ENCODE measurements at regions of chr17 and their contacts with region 1.

Region 1: GRCh38 chr17:50297407-50297865 is 23.2 kb downstream of the TMEM92 start:
- DNase-seq: peak; percentile 94
- H3K4me3 Mint-ChIP-seq: no peak overlapping the region
- H3K27ac Mint-ChIP-seq: no peak overlapping the region
- H3K4me1 Mint-ChIP-seq: no peaks in the 10 kb centered on the region
- H3K27me3 Mint-ChIP-seq: peaks cover 27% of the 10 kb centered on the region
- CTCF ChIP-seq: peak; percentile 99

Region 2: GRCh38 chr17:49843774-49844350 is 453.6 kb before region 1 on chr17:
- CTCF ChIA-PET with region 1: no interaction called
- intact Hi-C with region 1: no loop called
- DNase-seq: peak; percentile 74
- H3K4me3 Mint-ChIP-seq: no peak overlapping the region
- H3K27ac Mint-ChIP-seq: no peak overlapping the region
- H3K4me1 Mint-ChIP-seq: no peaks in the 10 kb centered on the region
- H3K27me3 Mint-ChIP-seq: no peaks in the 10 kb centered on the region
- CTCF ChIP-seq: peak; percentile 86

Region 3: GRCh38 chr17:50094753-50095619 is 202.4 kb before region 1 on chr17 and contains the start of gene PDK2:
- CTCF ChIA-PET with region 1: interaction called, 8 read pairs
- intact Hi-C with region 1: loop called (anchors 2 kb)
- DNase-seq: peak; percentile 98
- H3K4me3 Mint-ChIP-seq: peak within 1 kb of the TSS; percentile 90
- H3K27ac Mint-ChIP-seq: peak within 1 kb of the TSS; percentile 89
- H3K4me1 Mint-ChIP-seq: peaks cover 48% of the 10 kb centered on the region
- H3K27me3 Mint-ChIP-seq: no peaks in the 10 kb centered on the region
- CTCF ChIP-seq: no peak
- total RNA-seq, gene PDK2: 29.5 and 39.1 TPM in 2 replicates

Region 4: GRCh38 chr17:50269477-50270434 is 27.7 kb before region 1 on chr17:
- CTCF ChIA-PET with region 1: interaction called, 5 read pairs
- intact Hi-C with region 1: loop called (anchors 2 kb)
- DNase-seq: peak; percentile 79
- H3K4me3 Mint-ChIP-seq: no peak overlapping the region
- H3K27ac Mint-ChIP-seq: no peak overlapping the region
- H3K4me1 Mint-ChIP-seq: peaks cover 32% of the 10 kb centered on the region
- H3K27me3 Mint-ChIP-seq: peaks cover 67% of the 10 kb centered on the region
- CTCF ChIP-seq: peak; percentile 87

Region 5: GRCh38 chr17:50345432-50346312 is 48.2 kb after region 1 on chr17 and contains the start of gene XYLT2:
- CTCF ChIA-PET with region 1: no interaction called
- intact Hi-C with region 1: no loop called
- DNase-seq: peak; percentile 98
- H3K4me3 Mint-ChIP-seq: peak within 1 kb of the TSS; percentile 91
- H3K27ac Mint-ChIP-seq: peak within 1 kb of the TSS; percentile 46
- H3K4me1 Mint-ChIP-seq: peaks cover 21% of the 10 kb centered on the region
- H3K27me3 Mint-ChIP-seq: no peaks in the 10 kb centered on the region
- CTCF ChIP-seq: no peak
- total RNA-seq, gene XYLT2: 44.3 and 49.3 TPM in 2 replicates

Region 6: GRCh38 chr17:50458701-50459676 is 161.6 kb after region 1 on chr17:
- CTCF ChIA-PET with region 1: no interaction called
- intact Hi-C with region 1: no loop called
- DNase-seq: peak; percentile 40
- H3K4me3 Mint-ChIP-seq: no peak overlapping the region
- H3K27ac Mint-ChIP-seq: no peak overlapping the region
- H3K4me1 Mint-ChIP-seq: peaks cover 15% of the 10 kb centered on the region
- H3K27me3 Mint-ChIP-seq: no peaks in the 10 kb centered on the region
- CTCF ChIP-seq: no peak